MCF 10A (cell line): ENCODE measurements at regions of chr2 and their contacts with region 1.

Region 1: DNA sequence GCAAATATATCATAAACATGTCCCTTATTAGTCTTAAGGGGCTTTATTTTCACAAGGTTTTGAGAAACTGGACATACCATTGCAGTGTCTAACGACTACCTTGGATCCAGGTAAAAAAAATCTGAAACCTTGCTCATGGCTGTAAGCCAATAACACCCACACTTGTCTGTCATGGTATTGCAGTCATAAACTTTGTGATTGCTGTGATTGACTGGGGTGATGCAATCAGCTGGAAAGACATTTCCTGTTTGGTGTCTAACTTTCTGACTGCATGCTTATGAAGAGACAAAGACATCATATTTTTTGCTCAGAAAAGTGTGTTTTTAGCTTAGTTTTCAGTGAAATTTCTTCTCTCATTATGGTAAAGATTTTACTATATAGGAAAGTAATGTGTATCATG is 635.0 kb downstream of the TSN start:
- DNase-seq: peak; percentile 85
- H3K4me3 Mint-ChIP-seq: no peak overlapping the region
- H3K27ac Mint-ChIP-seq: peak overlapping the region; percentile 73
- H3K4me1 Mint-ChIP-seq: peaks cover 23% of the 10 kb centered on the region
- H3K27me3 Mint-ChIP-seq: no peaks in the 10 kb centered on the region
- CTCF ChIP-seq: no peak

Region 2: GRCh38 chr2:122236152-122236874 is 154.1 kb before region 1 on chr2:
- CTCF ChIA-PET with region 1: no interaction called
- POLR2A ChIA-PET with region 1: no interaction called
- intact Hi-C with region 1: loop called (anchors 1 kb)
- DNase-seq: peak; percentile 99
- H3K4me3 Mint-ChIP-seq: peak overlapping the region; percentile 1
- H3K27ac Mint-ChIP-seq: peak overlapping the region; percentile 6
- H3K4me1 Mint-ChIP-seq: peaks cover 42% of the 10 kb centered on the region
- H3K27me3 Mint-ChIP-seq: no peaks in the 10 kb centered on the region
- CTCF ChIP-seq: no peak

Region 3: DNA sequence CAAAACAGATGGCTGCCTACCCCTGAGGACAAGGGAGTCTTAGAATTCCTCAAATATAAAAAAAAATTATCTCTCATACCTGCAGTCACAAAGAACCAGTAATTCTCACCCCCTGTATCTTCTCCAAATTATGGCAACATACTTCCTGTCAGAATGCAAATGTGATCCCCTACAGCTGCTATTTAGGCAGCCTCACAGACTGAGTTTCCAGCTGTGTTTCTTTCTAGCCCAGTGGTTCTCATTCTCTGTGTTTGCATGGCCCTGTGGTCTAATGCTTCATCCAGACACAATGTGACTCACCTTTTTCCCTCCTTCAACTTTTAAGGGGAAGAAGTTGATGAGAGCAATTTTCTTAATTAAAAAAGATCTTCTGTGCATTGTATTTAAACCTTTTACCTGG is 91.3 kb after region 1 on chr2:
- CTCF ChIA-PET with region 1: no interaction called
- POLR2A ChIA-PET with region 1: no interaction called
- intact Hi-C with region 1: no loop called
- DNase-seq: no peak
- H3K4me3 Mint-ChIP-seq: no peak overlapping the region
- H3K27ac Mint-ChIP-seq: no peak overlapping the region
- H3K4me1 Mint-ChIP-seq: no peaks in the 10 kb centered on the region
- H3K27me3 Mint-ChIP-seq: no peaks in the 10 kb centered on the region
- CTCF ChIP-seq: no peak